RWPE1 (cell line): ENCODE measurements at regions of chr12 and their contacts with region 1.

Region 1: GRCh38 chr12:69570545-69571399 is 14.5 kb upstream of the CCT2 start:
- DNase-seq: peak; percentile 52
- H3K27ac ChIP-seq: no peak overlapping the region
- CTCF ChIP-seq: peak; percentile 82

Region 2: GRCh38 chr12:69388371-69388770 is 182.4 kb before region 1 on chr12:
- CTCF ChIA-PET with region 1: interaction called, 10 read pairs
- POLR2A ChIA-PET with region 1: no interaction called
- DNase-seq: peak; percentile 8
- H3K27ac ChIP-seq: no peak overlapping the region; the same call in 1 of the 2 replicates
- CTCF ChIP-seq: peak; percentile 75

Region 3: GRCh38 chr12:69470189-69471075 is 100.3 kb before region 1 on chr12 and contains the start of gene FRS2:
- CTCF ChIA-PET with region 1: interaction called, 16 read pairs
- POLR2A ChIA-PET with region 1: interaction called, 3 read pairs
- DNase-seq: peak; percentile 93
- H3K27ac ChIP-seq: peak within 1 kb of the TSS; percentile 86
- CTCF ChIP-seq: peak; percentile 59